ENCODE measurements at regions of chr17 and their contacts with region 1.

Region 1: DNA sequence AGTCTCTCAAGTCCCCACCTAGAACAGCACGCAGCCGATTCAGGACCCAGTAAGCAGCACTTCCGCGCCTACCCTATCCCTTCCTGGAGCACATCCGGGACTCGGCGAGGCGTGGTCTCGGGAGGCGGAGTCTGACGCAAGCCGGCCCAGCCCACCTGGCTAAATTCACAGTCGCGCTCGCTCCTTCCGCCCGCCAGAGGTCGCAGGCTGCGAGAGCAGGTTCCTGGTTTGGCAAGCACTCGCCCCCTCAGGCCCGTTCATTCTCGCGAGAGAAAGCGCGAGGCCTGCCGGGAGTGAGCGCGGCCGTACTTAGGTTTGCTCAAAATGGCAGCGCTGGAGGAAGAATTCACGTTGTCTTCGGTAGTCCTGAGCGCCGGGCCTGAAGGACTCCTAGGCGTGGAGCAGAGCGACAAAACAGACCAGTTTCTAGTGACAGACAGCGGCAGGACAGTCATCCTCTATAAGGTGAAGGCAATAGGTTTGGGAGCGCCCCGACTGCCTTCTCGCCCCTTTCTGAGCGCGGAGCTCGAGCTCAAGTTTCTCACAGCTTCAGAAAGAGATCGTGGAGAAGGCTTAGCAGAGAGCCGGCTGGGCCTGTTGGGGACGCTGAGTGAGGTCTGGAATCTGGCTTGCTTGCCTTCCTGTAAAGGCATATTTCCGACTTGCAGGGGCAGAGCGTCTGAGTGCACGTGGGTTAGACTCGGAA is at the start of gene NOL11:
- DNase-seq: peak; percentile 98 to 100 (median 100)
- ATAC-seq: peak; percentile 92 to 93
- H3K4me3 Mint-ChIP-seq: peak within 1 kb of the TSS; percentile 96 to 100 (median 98)
- H3K27ac Mint-ChIP-seq: peak within 1 kb of the TSS; percentile 94 to 100 (median 99)
- H3K4me1 Mint-ChIP-seq: peaks cover 5 to 42% (median 28%) of the 10 kb centered on the region in 4 donors
- H3K27me3 Mint-ChIP-seq: peaks cover 0 to 1% (median 0%) of the 10 kb centered on the region in 5 donors
- polyA plus RNA-seq, gene NOL11: 14.2 to 34.8 (median 25.5) TPM

Region 2: DNA sequence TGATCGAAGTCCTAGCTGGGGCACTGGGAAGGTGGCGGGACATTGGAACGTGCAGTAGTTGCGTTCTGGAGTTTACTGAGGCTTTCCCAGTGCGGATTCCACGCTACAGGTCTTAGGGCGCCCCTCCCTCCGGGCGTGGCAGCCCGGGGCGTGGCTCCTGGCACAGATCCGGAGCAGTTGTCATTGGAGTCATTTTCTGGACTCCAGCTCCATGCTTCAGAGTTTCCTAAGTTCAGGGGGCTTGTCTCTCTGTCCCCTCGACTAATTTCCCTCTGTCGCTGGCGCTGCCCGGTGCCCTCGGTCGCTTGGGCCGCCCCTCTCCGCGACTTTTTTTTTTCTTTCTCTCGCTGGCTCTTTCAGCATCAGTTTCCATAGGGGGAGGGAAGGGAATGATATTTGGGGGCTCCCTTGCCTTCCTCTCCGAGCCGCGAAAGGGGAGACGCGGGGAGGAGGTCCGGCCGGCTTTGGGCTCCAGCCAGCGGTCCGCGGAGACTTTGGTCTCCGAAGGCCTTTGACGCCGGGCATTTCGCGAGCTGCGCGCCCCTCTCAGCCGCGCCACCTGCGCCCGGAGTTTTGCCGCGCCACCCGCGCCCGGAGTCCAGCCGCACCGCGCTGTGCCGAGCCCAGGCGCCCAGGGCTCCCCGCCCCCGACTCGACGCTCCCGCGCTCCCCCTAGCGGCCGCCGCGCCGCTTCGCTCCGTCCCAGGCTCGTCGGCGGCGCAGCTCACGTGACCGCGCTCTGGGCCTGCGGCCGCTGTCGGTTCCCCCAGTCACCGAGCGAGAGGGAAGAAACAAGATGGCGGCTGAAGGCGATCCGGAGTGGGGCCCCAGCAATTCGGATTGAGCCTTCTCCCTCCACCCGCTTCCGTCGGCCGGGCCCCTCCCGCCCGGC is 107.2 kb after region 1 on chr17 and contains the start of gene BPTF:
- POLR2A ChIA-PET with region 1: interaction called, 23 read pairs
- DNase-seq: peak; percentile 84 to 94 (median 90)
- ATAC-seq: peak; percentile 79 to 80
- H3K4me3 Mint-ChIP-seq: peak within 1 kb of the TSS; percentile 93 to 99 (median 98)
- H3K27ac Mint-ChIP-seq: peak within 1 kb of the TSS; percentile 95 to 100 (median 99)
- H3K4me1 Mint-ChIP-seq: peaks cover 8 to 52% (median 30%) of the 10 kb centered on the region in 4 donors
- H3K27me3 Mint-ChIP-seq: no peaks in the 10 kb centered on the region
- polyA plus RNA-seq, gene BPTF: 9.9 to 18.8 (median 13.3) TPM